ENCODE measurements at regions of chr6 and their contacts with region 1.

Region 1: GRCh38 chr6:148250975-148251685 is 91.5 kb upstream of the SASH1 start:
- DNase-seq: peak in 1 of 2 experiments; percentile 21
- H3K4me3 ChIP-seq: no peak overlapping the region
- H3K4me3 Mint-ChIP-seq: no peak overlapping the region
- H3K27ac Mint-ChIP-seq: no peak overlapping the region
- H3K4me1 ChIP-seq: no peaks in the 10 kb centered on the region
- H3K4me1 Mint-ChIP-seq: no peaks in the 10 kb centered on the region
- H3K27me3 ChIP-seq: no peaks in the 10 kb centered on the region
- H3K27me3 Mint-ChIP-seq: no peaks in the 10 kb centered on the region
- CTCF ChIP-seq: peak; percentile 33 to 51

Region 2: DNA sequence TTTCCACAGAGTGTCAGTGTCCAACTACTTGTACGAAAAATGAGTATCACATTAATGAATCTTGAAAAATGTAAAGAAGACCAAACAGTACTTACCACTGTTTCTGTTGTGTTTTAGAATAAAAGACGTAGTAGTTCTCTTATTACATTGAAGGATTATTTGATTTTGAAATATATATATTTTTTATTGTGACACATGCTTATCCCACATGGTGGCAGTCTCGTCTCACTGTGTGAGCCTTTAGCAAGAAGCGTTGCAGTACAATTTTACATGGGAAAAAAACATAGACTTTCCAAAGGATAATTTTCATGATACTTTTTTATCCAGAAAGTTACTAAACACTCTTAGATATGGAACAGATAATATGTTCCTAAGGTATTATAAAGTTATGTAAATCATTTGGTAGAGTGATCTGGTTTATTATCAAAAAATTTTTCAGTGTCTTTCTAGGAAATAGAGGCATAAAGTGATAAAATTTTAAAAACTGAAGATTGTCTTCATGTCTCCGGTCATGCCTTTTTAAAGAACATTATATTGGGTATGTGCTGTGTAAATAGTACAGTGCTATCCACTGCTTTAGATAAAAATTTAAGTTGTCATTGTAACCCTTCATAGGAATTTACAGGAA is 860.1 kb before region 1 on chr6:
- CTCF ChIA-PET with region 1: no interaction called
- POLR2A ChIA-PET with region 1: no interaction called
- intact Hi-C with region 1: loop called (anchors 10 kb)
- DNase-seq: peak in 1 of 2 experiments; percentile 25
- H3K4me3 ChIP-seq: no peak overlapping the region
- H3K4me3 Mint-ChIP-seq: no peak overlapping the region
- H3K27ac Mint-ChIP-seq: no peak overlapping the region
- H3K4me1 ChIP-seq: no peaks in the 10 kb centered on the region
- H3K4me1 Mint-ChIP-seq: no peaks in the 10 kb centered on the region
- H3K27me3 ChIP-seq: no peaks in the 10 kb centered on the region
- H3K27me3 Mint-ChIP-seq: no peaks in the 10 kb centered on the region
- CTCF ChIP-seq: peak; percentile 31 to 36

Region 3: DNA sequence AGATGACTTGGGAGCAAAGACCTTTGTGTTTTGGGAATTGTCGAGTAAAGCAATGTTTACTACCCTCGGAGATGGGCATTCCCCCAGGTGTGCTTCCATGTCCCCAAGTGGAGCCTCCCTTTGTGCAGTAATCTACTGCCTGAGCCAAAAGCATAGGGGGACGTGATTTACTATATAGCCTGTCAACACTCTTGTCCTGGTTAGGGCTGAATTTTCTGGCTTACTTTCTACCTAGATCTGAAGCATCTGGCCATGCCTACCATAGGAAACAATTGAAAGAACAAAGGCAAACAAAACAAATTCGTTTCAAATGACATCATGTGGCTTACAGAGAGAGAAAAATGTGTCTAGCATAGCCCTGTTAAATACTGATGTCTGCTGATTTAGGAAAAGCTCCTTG is 392.1 kb before region 1 on chr6:
- CTCF ChIA-PET with region 1: no interaction called
- POLR2A ChIA-PET with region 1: no interaction called
- intact Hi-C with region 1: no loop called
- DNase-seq: no peak
- H3K4me3 ChIP-seq: no peak overlapping the region
- H3K4me3 Mint-ChIP-seq: no peak overlapping the region
- H3K27ac Mint-ChIP-seq: no peak overlapping the region
- H3K4me1 ChIP-seq: no peaks in the 10 kb centered on the region
- H3K4me1 Mint-ChIP-seq: no peaks in the 10 kb centered on the region
- H3K27me3 ChIP-seq: no peaks in the 10 kb centered on the region
- H3K27me3 Mint-ChIP-seq: no peaks in the 10 kb centered on the region
- CTCF ChIP-seq: no peak

Region 4: GRCh38 chr6:148144917-148145521 is 106.1 kb before region 1 on chr6:
- CTCF ChIA-PET with region 1: no interaction called
- POLR2A ChIA-PET with region 1: no interaction called
- intact Hi-C with region 1: loop called (anchors 1 kb)
- DNase-seq: peak; percentile 65 to 76
- H3K4me3 ChIP-seq: no peak overlapping the region
- H3K4me3 Mint-ChIP-seq: peak overlapping the region; percentile 50
- H3K27ac Mint-ChIP-seq: no peak overlapping the region
- H3K4me1 ChIP-seq: peaks cover 8% of the 10 kb centered on the region; the same call in 1 of the 2 replicates
- H3K4me1 Mint-ChIP-seq: peaks cover 25% of the 10 kb centered on the region
- H3K27me3 ChIP-seq: no peaks in the 10 kb centered on the region
- H3K27me3 Mint-ChIP-seq: no peaks in the 10 kb centered on the region
- CTCF ChIP-seq: peak; percentile 74 to 80

Region 5: GRCh38 chr6:148177589-148178233 is 73.4 kb before region 1 on chr6:
- CTCF ChIA-PET with region 1: interaction called, 5 read pairs
- POLR2A ChIA-PET with region 1: no interaction called
- intact Hi-C with region 1: loop called (anchors 1 kb)
- DNase-seq: peak; percentile 45 to 69
- H3K4me3 ChIP-seq: no peak overlapping the region
- H3K4me3 Mint-ChIP-seq: no peak overlapping the region
- H3K27ac Mint-ChIP-seq: no peak overlapping the region
- H3K4me1 ChIP-seq: no peaks in the 10 kb centered on the region
- H3K4me1 Mint-ChIP-seq: no peaks in the 10 kb centered on the region
- H3K27me3 ChIP-seq: no peaks in the 10 kb centered on the region
- H3K27me3 Mint-ChIP-seq: no peaks in the 10 kb centered on the region
- CTCF ChIP-seq: peak; percentile 64 to 78

Region 6: DNA sequence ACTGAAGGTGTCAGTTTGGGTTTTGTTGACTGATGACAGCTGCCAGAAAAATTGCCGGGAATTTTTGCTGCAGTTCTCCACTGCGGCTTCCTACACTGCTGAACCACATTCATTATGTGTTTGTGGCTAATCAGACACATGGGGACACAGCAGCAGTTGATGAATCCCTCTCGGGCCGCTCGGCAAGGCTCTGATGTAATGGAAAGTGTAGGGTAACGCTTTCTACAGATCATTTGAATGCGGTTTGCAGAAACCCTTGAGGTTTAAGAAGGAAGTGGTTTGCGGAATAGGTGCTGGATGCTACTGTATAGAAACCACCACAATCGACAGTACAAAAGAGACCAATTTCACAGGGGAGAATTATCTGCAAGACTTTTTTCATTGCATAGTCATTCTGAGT is 47.2 kb before region 1 on chr6:
- CTCF ChIA-PET with region 1: no interaction called
- POLR2A ChIA-PET with region 1: no interaction called
- intact Hi-C with region 1: no loop called
- DNase-seq: no peak
- H3K4me3 ChIP-seq: no peak overlapping the region
- H3K4me3 Mint-ChIP-seq: no peak overlapping the region
- H3K27ac Mint-ChIP-seq: no peak overlapping the region
- H3K4me1 ChIP-seq: no peaks in the 10 kb centered on the region
- H3K4me1 Mint-ChIP-seq: peaks cover 7% of the 10 kb centered on the region
- H3K27me3 ChIP-seq: no peaks in the 10 kb centered on the region
- H3K27me3 Mint-ChIP-seq: no peaks in the 10 kb centered on the region
- CTCF ChIP-seq: no peak

Region 7: DNA sequence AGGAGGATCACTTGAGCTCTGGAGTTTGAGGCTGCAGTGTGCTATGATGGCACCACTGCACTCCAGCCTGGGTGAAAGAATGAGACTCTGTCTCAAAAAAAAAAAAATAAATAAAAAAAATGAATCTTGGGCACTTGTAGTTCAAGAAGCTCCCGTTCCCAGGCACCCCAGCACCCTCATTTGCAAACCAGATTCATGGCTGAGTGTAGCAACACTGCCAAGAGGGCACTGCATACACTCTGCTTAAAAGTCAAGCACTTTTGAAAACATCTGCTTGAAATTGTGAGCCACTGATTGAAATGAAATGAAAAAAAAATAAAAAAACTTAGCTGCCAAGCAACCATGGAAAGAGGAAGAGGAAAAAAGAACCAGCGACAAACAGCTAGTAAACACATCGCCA is 33.2 kb before region 1 on chr6:
- CTCF ChIA-PET with region 1: no interaction called
- POLR2A ChIA-PET with region 1: no interaction called
- intact Hi-C with region 1: no loop called
- DNase-seq: no peak
- H3K4me3 ChIP-seq: no peak overlapping the region
- H3K4me3 Mint-ChIP-seq: no peak overlapping the region
- H3K27ac Mint-ChIP-seq: no peak overlapping the region
- H3K4me1 ChIP-seq: peaks cover 16% of the 10 kb centered on the region
- H3K4me1 Mint-ChIP-seq: peaks cover 18% of the 10 kb centered on the region
- H3K27me3 ChIP-seq: no peaks in the 10 kb centered on the region
- H3K27me3 Mint-ChIP-seq: no peaks in the 10 kb centered on the region
- CTCF ChIP-seq: no peak

Region 8: DNA sequence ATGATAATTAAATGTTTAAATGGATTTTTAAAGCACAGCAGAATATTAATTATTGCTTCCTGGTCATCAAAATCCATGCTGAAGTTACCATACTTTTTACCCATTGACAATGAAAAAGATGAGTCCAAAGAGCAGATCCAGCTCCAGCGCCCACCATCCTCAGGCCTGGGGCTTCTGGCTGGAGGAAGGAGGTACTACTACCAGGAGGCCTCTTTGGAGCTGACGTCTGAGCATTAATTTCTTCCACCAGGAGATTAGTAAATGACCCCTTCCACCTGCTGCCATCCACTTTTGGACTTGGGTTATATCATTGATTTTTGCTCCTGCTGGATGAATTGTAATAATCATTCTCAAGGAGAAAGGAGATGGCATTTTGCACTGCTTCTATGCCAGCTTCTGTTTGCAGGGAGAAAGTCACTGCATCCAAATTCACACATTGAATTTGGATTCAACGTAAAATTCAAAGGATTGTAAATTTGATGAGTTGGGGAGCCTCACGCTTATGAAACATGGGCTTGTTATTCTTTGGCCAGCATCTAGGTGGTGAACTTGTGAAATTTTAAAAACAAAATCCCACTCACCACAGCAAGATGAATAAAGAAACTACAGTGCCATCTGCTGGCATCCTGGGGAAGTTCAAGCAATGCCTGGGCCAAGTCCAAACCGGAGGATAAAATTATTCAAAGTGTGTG is 213.3 kb after region 1 on chr6:
- CTCF ChIA-PET with region 1: no interaction called
- POLR2A ChIA-PET with region 1: no interaction called
- intact Hi-C with region 1: loop called (anchors 1 kb)
- DNase-seq: peak; percentile 58 to 77
- H3K4me3 ChIP-seq: no peak overlapping the region
- H3K4me3 Mint-ChIP-seq: no peak overlapping the region
- H3K27ac Mint-ChIP-seq: peak overlapping the region; percentile 74
- H3K4me1 ChIP-seq: peaks cover 12% of the 10 kb centered on the region
- H3K4me1 Mint-ChIP-seq: peaks cover 13% of the 10 kb centered on the region
- H3K27me3 ChIP-seq: no peaks in the 10 kb centered on the region
- H3K27me3 Mint-ChIP-seq: no peaks in the 10 kb centered on the region
- CTCF ChIP-seq: peak; percentile 87 to 89